MCF 10A (cell line): ENCODE measurements at regions of chr6 and their contacts with region 1.

Region 1: GRCh38 chr6:27518881-27519795 is 46.2 kb upstream of the ZNF184 start:
- DNase-seq: peak; percentile 88
- H3K4me3 Mint-ChIP-seq: peak overlapping the region; percentile 92
- H3K27ac Mint-ChIP-seq: peak overlapping the region; percentile 85
- H3K4me1 Mint-ChIP-seq: no peaks in the 10 kb centered on the region
- H3K27me3 Mint-ChIP-seq: no peaks in the 10 kb centered on the region
- CTCF ChIP-seq: peak; percentile 73

Region 2: DNA sequence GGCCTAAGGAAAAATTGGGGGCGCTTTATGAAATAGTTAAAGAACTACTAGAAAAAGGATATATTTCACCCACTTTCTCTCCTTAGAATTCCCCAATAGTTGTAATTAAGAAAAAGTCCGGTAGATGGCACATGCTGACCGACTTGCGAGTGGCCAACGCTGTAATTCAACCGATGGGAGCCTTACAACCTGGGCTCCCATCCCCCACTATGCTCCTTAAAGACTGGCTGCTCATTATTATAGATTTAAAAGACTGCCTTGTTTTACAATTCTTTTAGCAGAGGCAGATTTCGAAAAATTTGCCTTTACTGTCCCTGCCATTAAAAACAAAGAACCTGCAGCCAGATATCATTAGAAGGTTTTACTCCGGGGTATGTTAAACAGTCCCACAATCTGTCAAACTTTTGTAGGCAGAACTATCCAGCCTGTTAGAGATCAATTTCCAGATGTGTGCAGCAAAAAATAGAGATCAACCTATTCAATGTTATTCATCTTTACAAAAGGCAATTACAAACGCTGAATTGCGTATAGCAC is 330.2 kb before region 1 on chr6:
- CTCF ChIA-PET with region 1: interaction called, 3 read pairs
- POLR2A ChIA-PET with region 1: interaction called, 5 read pairs
- intact Hi-C with region 1: loop called (anchors 1 kb)
- DNase-seq: peak; percentile 88
- H3K4me3 Mint-ChIP-seq: peak overlapping the region; percentile 82
- H3K27ac Mint-ChIP-seq: peak overlapping the region; percentile 53
- H3K4me1 Mint-ChIP-seq: no peaks in the 10 kb centered on the region
- H3K27me3 Mint-ChIP-seq: no peaks in the 10 kb centered on the region
- CTCF ChIP-seq: peak; percentile 80

Region 3: DNA sequence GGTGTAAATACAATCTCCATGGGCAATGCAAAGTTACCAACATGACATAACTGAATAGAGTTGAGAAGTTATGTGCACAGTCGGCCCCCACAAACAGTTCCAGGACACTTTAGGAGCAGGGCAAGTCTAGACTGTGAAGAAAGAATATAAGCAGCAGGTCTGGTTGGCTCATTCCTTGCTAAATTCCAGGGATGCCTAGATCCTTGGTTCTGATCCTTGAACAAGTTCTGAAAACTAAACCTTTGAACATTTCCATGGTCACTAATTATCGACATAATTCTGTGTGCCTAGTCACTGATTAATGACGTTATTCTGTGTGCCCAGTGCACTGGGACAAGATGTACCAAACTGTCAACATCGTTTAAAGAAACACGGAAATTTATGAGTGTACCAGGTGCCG is 58.4 kb before region 1 on chr6:
- CTCF ChIA-PET with region 1: no interaction called
- POLR2A ChIA-PET with region 1: no interaction called
- intact Hi-C with region 1: no loop called
- DNase-seq: no peak
- H3K4me3 Mint-ChIP-seq: no peak overlapping the region
- H3K27ac Mint-ChIP-seq: no peak overlapping the region
- H3K4me1 Mint-ChIP-seq: peaks cover under 1% of the 10 kb centered on the region
- H3K27me3 Mint-ChIP-seq: no peaks in the 10 kb centered on the region
- CTCF ChIP-seq: no peak

Region 4: GRCh38 chr6:27503436-27504030 is 15.6 kb before region 1 on chr6:
- CTCF ChIA-PET with region 1: interaction called, 15 read pairs
- POLR2A ChIA-PET with region 1: interaction called, 19 read pairs
- intact Hi-C with region 1: no loop called
- DNase-seq: peak; percentile 74
- H3K4me3 Mint-ChIP-seq: peak overlapping the region; percentile 83
- H3K27ac Mint-ChIP-seq: peak overlapping the region; percentile 84
- H3K4me1 Mint-ChIP-seq: peaks cover 11% of the 10 kb centered on the region
- H3K27me3 Mint-ChIP-seq: no peaks in the 10 kb centered on the region
- CTCF ChIP-seq: no peak

Region 5: DNA sequence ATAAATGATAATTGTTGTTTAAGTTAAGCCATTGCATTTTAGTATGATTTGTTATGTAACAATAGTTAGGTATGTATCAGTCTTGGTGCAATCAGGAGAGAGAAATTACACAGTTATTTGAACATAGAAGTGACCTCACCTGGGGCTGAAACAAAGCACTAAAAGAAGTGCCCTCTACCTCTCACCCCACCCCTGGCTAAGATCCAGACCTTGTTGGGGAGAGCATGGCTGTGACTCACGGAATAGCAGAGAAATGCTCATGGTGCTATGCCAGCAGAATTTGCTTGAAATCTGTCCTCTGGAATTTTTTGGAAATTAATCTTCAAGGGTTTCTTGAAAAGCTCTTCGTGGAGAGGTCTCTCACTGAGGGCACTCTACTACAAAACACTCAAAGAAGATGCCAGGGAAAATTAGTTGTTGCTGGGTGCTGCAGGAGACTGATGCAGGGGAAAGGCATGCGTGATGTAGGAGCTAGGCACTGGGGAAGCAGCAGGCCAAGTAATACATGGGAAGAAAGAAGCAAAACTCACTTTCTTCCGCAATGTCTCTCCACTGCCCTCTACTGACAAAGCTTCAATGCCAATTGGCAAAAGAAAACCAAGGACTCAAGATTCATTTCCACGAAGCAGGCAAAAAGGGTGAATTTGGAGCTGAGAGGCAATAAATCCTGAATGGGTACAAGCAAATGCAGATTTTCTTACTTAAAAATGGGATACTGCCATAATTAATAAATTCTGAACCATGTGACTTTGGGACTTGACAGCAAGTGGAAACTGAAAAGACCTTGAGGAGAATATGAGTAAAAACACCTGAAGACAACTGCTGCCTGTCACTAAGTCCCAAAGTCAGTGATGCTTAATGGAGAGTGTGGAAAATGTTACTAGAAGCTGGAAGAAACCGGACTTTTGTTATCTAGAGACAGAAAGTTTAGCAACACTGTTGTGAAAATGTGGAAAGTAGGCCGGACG is 90.1 kb after region 1 on chr6:
- CTCF ChIA-PET with region 1: interaction called, 50 read pairs
- POLR2A ChIA-PET with region 1: interaction called, 41 read pairs
- intact Hi-C with region 1: loop called (anchors 1 kb)
- DNase-seq: peak; percentile 89
- H3K4me3 Mint-ChIP-seq: peak overlapping the region; percentile 47
- H3K27ac Mint-ChIP-seq: peak overlapping the region; percentile 83
- H3K4me1 Mint-ChIP-seq: peaks cover 22% of the 10 kb centered on the region
- H3K27me3 Mint-ChIP-seq: no peaks in the 10 kb centered on the region
- CTCF ChIP-seq: peak; percentile 77

Region 6: GRCh38 chr6:27650620-27651370 is 131.7 kb after region 1 on chr6:
- CTCF ChIA-PET with region 1: no interaction called
- POLR2A ChIA-PET with region 1: no interaction called
- intact Hi-C with region 1: no loop called
- DNase-seq: peak; percentile 83
- H3K4me3 Mint-ChIP-seq: peak overlapping the region; percentile 36
- H3K27ac Mint-ChIP-seq: no peak overlapping the region
- H3K4me1 Mint-ChIP-seq: peaks cover 6% of the 10 kb centered on the region
- H3K27me3 Mint-ChIP-seq: no peaks in the 10 kb centered on the region
- CTCF ChIP-seq: no peak

Region 7: GRCh38 chr6:27672113-27672799 is 153.1 kb after region 1 on chr6:
- CTCF ChIA-PET with region 1: no interaction called
- POLR2A ChIA-PET with region 1: interaction called, 12 read pairs
- intact Hi-C with region 1: loop called (anchors 5 kb)
- DNase-seq: peak; percentile 84
- H3K4me3 Mint-ChIP-seq: peak overlapping the region; percentile 76
- H3K27ac Mint-ChIP-seq: peak overlapping the region; percentile 77
- H3K4me1 Mint-ChIP-seq: peaks cover 12% of the 10 kb centered on the region
- H3K27me3 Mint-ChIP-seq: no peaks in the 10 kb centered on the region
- CTCF ChIP-seq: no peak

Region 8: GRCh38 chr6:27795697-27796494 is 276.8 kb after region 1 on chr6:
- CTCF ChIA-PET with region 1: interaction called, 4 read pairs
- POLR2A ChIA-PET with region 1: no interaction called
- intact Hi-C with region 1: loop called (anchors 5 kb)
- DNase-seq: peak; percentile 91
- H3K4me3 Mint-ChIP-seq: no peak overlapping the region
- H3K27ac Mint-ChIP-seq: no peak overlapping the region
- H3K4me1 Mint-ChIP-seq: peaks cover 5% of the 10 kb centered on the region
- H3K27me3 Mint-ChIP-seq: no peaks in the 10 kb centered on the region
- CTCF ChIP-seq: peak; percentile 79